ENCODE measurements at regions of chr7 and their contacts with region 1.

Region 1: DNA sequence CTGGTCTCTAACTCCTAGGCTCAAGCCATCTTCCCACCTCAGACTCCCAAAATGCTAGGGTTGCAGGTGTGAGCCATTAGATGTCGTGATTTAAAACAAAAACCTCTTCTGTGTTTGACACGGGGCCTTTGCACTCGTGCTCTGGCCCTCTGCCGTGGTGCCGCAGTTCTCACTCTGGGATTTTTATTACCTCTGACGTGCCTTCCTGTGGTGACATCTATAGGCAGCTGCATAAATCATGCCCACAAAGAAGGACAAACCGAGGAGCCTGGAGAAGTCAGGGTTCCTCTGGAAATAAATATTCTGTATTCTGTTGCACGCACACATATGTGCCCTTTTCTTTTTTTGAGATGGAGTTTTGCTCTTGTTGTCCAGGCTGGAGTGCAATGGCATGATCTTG is 25.9 kb upstream of the OCM start:
- DNase-seq: no peak
- H3K4me3 ChIP-seq: no peak overlapping the region
- H3K27ac ChIP-seq: no peak overlapping the region
- H3K4me1 ChIP-seq: no peaks in the 10 kb centered on the region
- H3K27me3 ChIP-seq: no peaks in the 10 kb centered on the region
- CTCF ChIP-seq: no peak

Region 2: DNA sequence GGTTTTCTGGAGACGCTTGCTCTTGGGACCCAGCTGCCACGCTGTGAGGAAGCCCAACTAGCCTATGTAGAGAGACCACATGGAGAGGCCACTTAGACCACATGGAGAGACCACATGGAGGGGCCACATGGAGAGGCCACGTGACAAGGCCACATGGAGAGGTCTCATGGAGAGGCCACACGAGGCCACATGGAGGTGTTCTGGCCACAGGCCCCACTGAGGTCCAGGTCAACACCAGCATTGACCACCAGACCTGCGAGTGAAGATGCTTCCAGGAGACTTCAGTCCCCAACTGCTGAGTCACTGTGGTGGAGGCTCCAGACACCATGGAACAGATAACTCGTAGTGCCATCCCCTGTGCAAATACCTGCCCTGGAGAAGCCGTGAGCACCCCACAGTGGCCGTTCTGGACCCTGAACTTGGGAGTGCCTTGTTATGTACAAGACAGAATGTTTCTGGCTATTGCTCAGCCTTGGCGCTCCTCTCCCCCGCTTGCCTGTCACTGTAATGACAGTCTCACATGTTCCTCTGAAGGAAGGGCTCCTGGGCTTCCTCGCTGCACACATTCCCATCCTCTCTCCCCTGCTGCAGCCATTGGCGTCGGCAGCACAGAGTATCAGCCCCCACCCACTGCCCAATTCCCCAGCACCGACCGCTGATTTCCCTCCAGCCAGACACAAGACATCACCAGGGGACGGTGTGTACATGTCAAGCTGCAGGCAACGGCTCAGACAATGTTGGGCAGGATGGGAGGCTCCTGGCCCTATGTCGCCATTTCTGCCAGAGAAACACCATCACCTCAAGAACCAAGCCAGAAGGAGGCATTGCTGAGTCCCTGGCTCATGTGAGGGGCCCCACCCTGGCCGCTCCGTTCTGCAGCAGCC is 382.1 kb before region 1 on chr7:
- intact Hi-C with region 1: no loop called
- DNase-seq: no peak
- H3K4me3 ChIP-seq: no peak overlapping the region
- H3K27ac ChIP-seq: no peak overlapping the region
- H3K4me1 ChIP-seq: peaks cover 0 to 3% of the 10 kb centered on the region in 2 donors
- H3K27me3 ChIP-seq: no peaks in the 10 kb centered on the region
- CTCF ChIP-seq: no peak

Region 3: GRCh38 chr7:6008668-6009611 is 154.2 kb after region 1 on chr7 and contains the starts of genes AIMP2 and PMS2:
- intact Hi-C with region 1: loop called (anchors 10 kb)
- DNase-seq: peak; percentile 96 to 99
- H3K4me3 ChIP-seq: peak within 1 kb of the TSS; percentile 53 to 67
- H3K27ac ChIP-seq: peak within 1 kb of the TSS; percentile 67 to 85
- H3K4me1 ChIP-seq: peaks cover 0 to 17% of the 10 kb centered on the region in 2 donors
- H3K27me3 ChIP-seq: no peaks in the 10 kb centered on the region
- CTCF ChIP-seq: peak in 1 of 3 experiments; percentile 14
- total RNA-seq, gene AIMP2: 19.4 TPM
- total RNA-seq, gene PMS2: 13.2 TPM

Region 4: GRCh38 chr7:6026011-6026819 is 171.5 kb after region 1 on chr7:
- intact Hi-C with region 1: no loop called
- DNase-seq: peak; percentile 12 to 78
- H3K4me3 ChIP-seq: peak overlapping the region in 1 of 2 donors; percentile 41
- H3K27ac ChIP-seq: peak overlapping the region; percentile 46 to 51
- H3K4me1 ChIP-seq: no peaks in the 10 kb centered on the region
- H3K27me3 ChIP-seq: no peaks in the 10 kb centered on the region
- CTCF ChIP-seq: peak in 1 of 3 experiments; percentile 7

Region 5: DNA sequence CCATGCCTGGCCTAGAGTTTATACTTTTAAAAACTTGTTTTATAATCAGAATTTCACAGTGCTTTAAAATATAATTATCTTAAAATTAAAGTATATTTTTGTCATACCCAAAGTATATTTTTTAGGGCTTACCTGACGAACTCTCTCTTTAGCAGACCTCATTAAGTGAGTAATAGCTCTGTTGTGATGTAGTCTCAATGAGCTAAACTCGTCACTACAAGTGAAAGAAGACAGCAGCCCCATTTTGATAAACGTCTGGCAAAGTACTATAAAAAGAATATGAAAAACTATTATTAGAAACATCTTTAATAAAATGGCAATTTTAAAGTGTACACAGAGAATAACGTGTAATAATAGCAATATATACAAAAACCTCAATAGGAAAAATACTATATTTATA is 195.0 kb after region 1 on chr7:
- intact Hi-C with region 1: no loop called
- DNase-seq: no peak
- H3K4me3 ChIP-seq: no peak overlapping the region
- H3K27ac ChIP-seq: no peak overlapping the region
- H3K4me1 ChIP-seq: no peaks in the 10 kb centered on the region
- H3K27me3 ChIP-seq: no peaks in the 10 kb centered on the region
- CTCF ChIP-seq: no peak

Measured in ascending aorta (tissue), 2 donors.